ENCODE measurements at regions of chr1 and their contacts with region 1.

Region 1: DNA sequence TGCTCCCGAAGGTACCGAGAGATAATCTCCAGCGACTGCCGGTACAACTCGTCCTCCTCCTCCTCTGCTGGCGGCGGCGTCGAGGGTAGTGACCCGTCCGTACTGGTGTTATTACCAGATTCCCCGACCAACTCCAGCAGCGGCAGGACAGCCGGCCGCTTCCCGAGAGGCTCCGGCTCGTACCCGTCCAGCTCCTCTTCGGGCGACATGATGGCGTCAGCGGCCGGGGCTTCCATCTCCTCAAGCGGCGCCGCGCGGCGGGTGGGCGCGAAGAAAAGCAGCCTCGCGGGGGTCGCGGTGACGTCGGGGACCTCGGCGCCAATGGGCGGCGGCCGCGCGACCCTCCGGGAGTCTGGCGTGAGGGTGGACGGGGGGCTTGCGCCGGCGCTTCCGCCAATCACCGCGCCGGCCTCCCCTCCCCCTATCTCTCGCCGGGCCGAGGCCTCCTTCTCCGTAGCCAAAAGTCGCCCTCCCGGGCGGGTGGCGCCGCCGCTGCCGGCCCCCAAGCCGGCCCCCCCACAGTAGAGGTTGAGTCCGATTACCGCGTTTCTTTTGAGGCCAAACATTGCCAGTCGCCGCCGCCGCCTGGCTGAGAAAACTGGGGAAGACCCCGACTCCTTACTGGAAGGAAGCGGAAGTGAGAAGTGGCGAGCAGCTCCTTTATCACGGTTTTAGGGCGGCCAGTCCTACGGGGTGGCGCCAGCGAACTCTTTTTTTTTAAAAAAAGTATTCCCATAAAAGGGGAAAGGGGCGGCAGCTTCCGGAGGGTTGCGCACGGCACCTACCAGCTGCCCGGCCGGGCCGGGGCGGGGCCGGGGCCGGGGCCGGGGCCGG is at the start of gene MCL1:
- DNase-seq: peak; percentile 90
- H3K27ac ChIP-seq: peak within 1 kb of the TSS; percentile 98
- CTCF ChIP-seq: no peak

Region 2: DNA sequence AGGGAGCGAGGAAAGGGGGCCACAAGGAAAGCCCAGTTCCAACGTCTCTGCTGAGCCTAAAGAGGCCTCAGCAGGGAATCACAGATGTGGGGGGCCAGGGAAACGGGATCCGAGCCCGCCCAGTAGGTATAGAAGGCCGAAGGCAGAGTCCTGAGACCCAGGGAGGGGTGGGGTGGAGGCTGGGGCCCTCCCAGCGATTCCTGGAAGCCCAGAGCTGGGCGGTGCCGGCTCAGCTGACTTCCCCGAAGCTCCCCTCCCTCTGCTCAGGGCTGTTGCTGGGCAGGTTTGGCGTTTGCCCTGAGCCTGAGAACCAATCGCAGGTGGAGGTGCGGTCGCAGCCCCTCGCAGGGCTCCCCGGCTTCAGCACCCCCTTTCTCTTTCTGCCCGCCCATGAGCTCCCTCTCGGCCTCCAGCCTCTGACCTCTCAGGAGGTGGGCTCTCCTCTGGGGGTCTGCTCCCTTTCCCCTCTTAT is 17.2 kb before region 1 on chr1:
- CTCF ChIA-PET with region 1: interaction called, 11 read pairs
- POLR2A ChIA-PET with region 1: interaction called, 10 read pairs
- DNase-seq: peak; percentile 88
- H3K27ac ChIP-seq: peak overlapping the region; percentile 100
- CTCF ChIP-seq: no peak

Region 3: GRCh38 chr1:150567717-150568593 is 11.2 kb before region 1 on chr1:
- CTCF ChIA-PET with region 1: no interaction called
- POLR2A ChIA-PET with region 1: interaction called, 16 read pairs
- DNase-seq: peak; percentile 87
- H3K27ac ChIP-seq: peak overlapping the region; percentile 100
- CTCF ChIP-seq: no peak

Measured in RWPE1 (cell line).